ENCODE measurements at regions of chr1 and their contacts with region 1.

Region 1: DNA sequence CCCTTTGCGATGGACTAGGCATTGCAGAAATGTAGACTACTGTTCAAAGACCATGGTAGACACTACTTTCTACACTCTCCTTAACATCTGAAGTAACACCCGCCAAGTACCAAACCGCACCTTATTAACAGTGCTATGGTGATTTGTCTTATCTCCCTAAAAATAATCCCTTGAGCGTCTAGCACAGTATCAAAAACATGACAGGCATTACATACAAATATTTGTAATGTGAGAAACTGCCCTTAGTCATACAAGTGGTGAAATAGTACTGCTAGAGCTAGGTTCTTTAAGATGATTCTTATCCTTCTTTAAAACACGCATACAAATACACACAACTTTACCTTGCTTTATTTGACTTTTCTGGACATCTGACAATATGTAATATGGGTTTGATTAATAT is 27.2 kb downstream of the PUM1 start:
- DNase-seq: no peak
- ATAC-seq: no peak
- H3K4me3 Mint-ChIP-seq: no peak overlapping the region
- H3K27ac Mint-ChIP-seq: no peak overlapping the region
- H3K4me1 Mint-ChIP-seq: peaks cover 54% of the 10 kb centered on the region
- H3K27me3 Mint-ChIP-seq: no peaks in the 10 kb centered on the region
- CTCF ChIP-seq: no peak

Region 2: DNA sequence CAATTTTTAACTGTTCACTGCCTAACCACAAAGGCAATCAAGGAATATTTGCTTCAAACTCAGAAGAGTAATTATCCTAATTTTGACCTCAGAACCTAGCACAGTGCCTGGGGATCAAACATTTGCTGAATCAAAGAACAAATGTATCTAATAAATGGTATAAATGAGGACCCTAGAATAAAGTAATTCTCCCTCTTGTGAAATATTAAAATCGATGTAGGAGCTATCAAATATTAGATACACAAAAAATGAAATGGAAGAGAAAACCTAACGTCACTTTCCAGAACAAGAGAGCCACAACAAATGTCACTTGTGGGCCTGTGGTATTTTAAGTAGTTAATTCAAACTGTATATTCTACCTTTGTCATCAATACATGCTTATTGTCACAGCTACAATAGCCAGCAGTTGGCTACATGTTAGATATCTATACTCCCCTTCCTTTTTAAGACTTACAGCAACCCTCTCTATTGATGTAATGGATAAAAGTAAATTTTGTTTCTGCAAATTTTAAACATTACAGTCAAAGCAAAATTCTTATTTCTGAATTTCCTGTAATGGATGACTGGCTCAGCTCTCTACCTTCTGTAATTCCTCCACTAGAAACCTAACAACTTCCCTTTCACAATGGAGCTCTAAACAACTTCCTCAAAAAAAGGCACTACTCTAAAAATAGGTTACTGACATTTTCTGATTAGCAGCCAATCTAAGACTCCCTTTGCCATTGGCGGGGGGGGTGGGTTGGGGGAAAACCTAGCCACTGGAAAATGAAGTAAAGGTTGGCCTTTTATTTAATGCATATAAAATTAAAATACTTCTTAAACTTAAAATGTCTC is 10.4 kb before region 1 on chr1:
- CTCF ChIA-PET with region 1: interaction called, 3 read pairs
- POLR2A ChIA-PET with region 1: interaction called, 10 read pairs
- DNase-seq: no peak
- ATAC-seq: no peak
- H3K4me3 Mint-ChIP-seq: no peak overlapping the region
- H3K27ac Mint-ChIP-seq: peak overlapping the region; percentile 21
- H3K4me1 Mint-ChIP-seq: peaks cover 83% of the 10 kb centered on the region
- H3K27me3 Mint-ChIP-seq: no peaks in the 10 kb centered on the region
- CTCF ChIP-seq: no peak